Posterior vena cava (tissue), 2 donors: ENCODE measurements at regions of chr2 and their contacts with region 1.

Region 1: GRCh38 chr2:237122214-237122666 is 36.6 kb downstream of the COPS8 start:
- DNase-seq: peak; percentile 86

Region 2: GRCh38 chr2:237132799-237133198 is 10.6 kb after region 1 on chr2:
- intact Hi-C with region 1: loop called in 1 of 2 experiments (anchors 1 kb)
- DNase-seq: no peak

Region 3: DNA sequence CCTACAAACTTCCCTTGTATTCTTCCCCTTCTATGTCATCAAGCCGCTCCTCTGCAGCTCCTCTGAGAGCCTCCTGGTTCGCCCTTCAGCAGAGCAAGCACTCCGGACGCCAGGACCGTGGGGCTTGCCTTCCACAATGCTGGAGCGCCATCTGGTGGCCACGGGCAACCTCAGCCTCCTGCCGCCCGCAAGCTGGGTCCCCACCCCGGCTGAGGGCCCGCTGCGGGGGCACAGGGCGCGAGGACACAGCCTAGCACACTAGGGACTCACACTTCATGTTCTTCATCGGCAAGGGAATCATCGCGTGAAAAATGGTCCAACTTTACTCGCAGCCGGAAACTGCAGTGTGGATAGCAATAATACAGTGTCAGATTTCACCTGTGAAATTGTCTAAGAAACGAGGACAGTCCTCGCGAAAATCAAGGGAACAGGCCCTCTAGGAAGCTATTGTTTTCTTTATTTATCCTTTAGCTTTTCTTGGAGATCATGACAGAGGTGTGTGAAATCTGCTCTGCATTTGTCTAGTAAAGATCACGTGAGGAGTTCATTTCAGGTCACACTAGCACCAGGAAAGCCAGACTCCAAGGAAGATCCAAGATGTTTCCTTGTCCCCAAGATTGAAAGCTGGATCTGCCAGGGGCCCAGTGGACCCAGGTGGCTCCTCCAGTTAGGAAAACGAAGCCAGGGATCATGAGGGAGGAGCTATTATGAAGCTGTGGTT is 449.9 kb after region 1 on chr2:
- intact Hi-C with region 1: loop called (anchors 10 kb)
- DNase-seq: peak; percentile 97